ENCODE measurements at regions of chr12 and their contacts with region 1.

Region 1: GRCh38 chr12:49188914-49189367 is at the start of gene TUBA1A:
- DNase-seq: peak; percentile 89 to 95
- H3K4me3 ChIP-seq: peak within 1 kb of the TSS; percentile 57 to 93 (median 84)
- H3K27ac ChIP-seq: peak within 1 kb of the TSS; percentile 76
- H3K4me1 ChIP-seq: no peaks in the 10 kb centered on the region; a peak in 2 of 7 replicates
- H3K27me3 ChIP-seq: no peaks in the 10 kb centered on the region
- CTCF ChIP-seq: no peak
- EP300 ChIP-seq: no peak
- POLR2A ChIP-seq: peak; percentile 93 to 96
- RAD21 ChIP-seq: no peak
- total RNA-seq, gene TUBA1A: 283 and 290 TPM in 2 replicates

Region 2: GRCh38 chr12:49170924-49171323 is 18.0 kb before region 1 on chr12:
- CTCF ChIA-PET with region 1: interaction called, 3 read pairs
- POLR2A ChIA-PET with region 1: interaction called, 13 read pairs
- DNase-seq: no peak
- H3K4me3 ChIP-seq: no peak overlapping the region
- H3K27ac ChIP-seq: no peak overlapping the region
- H3K4me1 ChIP-seq: no peaks in the 10 kb centered on the region
- H3K27me3 ChIP-seq: no peaks in the 10 kb centered on the region
- CTCF ChIP-seq: no peak
- EP300 ChIP-seq: no peak
- POLR2A ChIP-seq: no peak
- RAD21 ChIP-seq: no peak

Region 3: GRCh38 chr12:49200919-49201594 is 12.1 kb after region 1 on chr12:
- CTCF ChIA-PET with region 1: interaction called, 3 read pairs
- POLR2A ChIA-PET with region 1: interaction called, 18 read pairs
- DNase-seq: no peak
- H3K4me3 ChIP-seq: peak overlapping the region in 1 of 4 experiments; percentile 10; a peak in 1 of 8 replicates
- H3K27ac ChIP-seq: no peak overlapping the region
- H3K4me1 ChIP-seq: peaks cover 0 to 16% (median 4%) of the 10 kb centered on the region in 4 experiments; a peak in 3 of 7 replicates
- H3K27me3 ChIP-seq: peaks cover 0 to 2% (median 0%) of the 10 kb centered on the region in 4 experiments; a peak in 1 of 7 replicates
- CTCF ChIP-seq: no peak
- EP300 ChIP-seq: no peak
- POLR2A ChIP-seq: no peak
- RAD21 ChIP-seq: no peak

Region 4: DNA sequence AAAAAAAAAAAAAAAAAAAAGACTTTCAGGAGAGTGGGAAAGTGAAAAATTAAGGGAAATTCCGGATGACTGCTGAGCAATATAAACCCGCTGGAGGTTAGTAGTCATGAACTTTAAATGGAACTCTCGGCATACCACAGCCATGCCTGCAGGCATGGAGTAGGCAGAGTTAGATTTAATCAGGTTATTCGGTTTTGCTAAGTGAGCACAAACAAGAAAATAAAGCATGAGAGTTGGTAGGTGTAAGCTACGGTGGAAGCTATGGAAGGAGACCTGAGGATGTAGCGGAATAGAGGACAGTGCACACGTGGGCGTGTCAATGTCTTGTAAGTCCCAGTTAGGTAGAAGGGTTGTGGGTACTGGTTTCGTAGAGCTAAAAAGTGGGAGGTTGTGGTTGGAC is 64.1 kb after region 1 on chr12:
- CTCF ChIA-PET with region 1: no interaction called
- POLR2A ChIA-PET with region 1: no interaction called
- DNase-seq: no peak
- H3K4me3 ChIP-seq: no peak overlapping the region
- H3K27ac ChIP-seq: no peak overlapping the region
- H3K4me1 ChIP-seq: no peaks in the 10 kb centered on the region
- H3K27me3 ChIP-seq: no peaks in the 10 kb centered on the region
- CTCF ChIP-seq: no peak
- EP300 ChIP-seq: no peak
- POLR2A ChIP-seq: no peak
- RAD21 ChIP-seq: no peak

Measured in H1 (cell line).